ENCODE measurements at regions of chr22 and their contacts with region 1.

Region 1: DNA sequence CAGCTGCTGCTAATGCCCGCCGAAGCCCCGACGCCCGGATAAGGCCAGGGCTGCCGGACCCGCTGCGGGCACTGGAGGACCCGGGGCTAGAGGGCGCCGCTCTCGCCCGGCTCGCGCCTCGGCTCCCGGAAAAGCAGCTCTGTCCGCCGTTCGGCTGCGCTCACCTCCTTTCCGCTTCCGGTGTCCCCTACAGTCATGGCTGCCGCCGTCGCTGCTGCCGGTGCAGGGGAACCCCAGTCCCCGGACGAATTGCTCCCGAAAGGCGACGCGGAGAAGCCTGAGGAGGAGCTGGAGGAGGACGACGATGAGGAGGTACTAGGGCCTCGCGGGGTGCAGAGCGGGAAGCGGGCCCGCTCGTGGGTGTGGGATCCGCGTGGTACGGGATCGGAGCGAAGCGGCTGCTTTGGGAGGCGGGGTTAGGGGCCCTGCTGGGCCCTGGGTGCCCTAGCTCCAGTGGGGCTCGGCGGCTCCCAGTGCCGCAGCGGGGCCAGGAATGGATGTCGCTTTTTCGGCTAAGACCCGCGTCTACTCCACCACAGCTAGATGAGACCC is at the start of gene TOMM22:
- DNase-seq: peak; percentile 88 to 94 (median 92)
- ATAC-seq: peak; percentile 96 to 99 (median 99)
- H3K4me3 ChIP-seq: peak within 1 kb of the TSS; percentile 72 to 100 (median 92)
- H3K27ac ChIP-seq: peak within 1 kb of the TSS in 11 of 12 donors; percentile 53 to 88 (median 79)
- H3K4me1 ChIP-seq: peaks cover 0 to 17% (median 8%) of the 10 kb centered on the region in 12 donors
- H3K27me3 ChIP-seq: no peaks in the 10 kb centered on the region
- CTCF ChIP-seq: peak; percentile 24 to 91 (median 64)
- POLR2A ChIP-seq: peak in 1 of 2 donors; percentile 47
- total RNA-seq, gene TOMM22: 37.1 to 82.1 (median 71.6) TPM

Region 2: DNA sequence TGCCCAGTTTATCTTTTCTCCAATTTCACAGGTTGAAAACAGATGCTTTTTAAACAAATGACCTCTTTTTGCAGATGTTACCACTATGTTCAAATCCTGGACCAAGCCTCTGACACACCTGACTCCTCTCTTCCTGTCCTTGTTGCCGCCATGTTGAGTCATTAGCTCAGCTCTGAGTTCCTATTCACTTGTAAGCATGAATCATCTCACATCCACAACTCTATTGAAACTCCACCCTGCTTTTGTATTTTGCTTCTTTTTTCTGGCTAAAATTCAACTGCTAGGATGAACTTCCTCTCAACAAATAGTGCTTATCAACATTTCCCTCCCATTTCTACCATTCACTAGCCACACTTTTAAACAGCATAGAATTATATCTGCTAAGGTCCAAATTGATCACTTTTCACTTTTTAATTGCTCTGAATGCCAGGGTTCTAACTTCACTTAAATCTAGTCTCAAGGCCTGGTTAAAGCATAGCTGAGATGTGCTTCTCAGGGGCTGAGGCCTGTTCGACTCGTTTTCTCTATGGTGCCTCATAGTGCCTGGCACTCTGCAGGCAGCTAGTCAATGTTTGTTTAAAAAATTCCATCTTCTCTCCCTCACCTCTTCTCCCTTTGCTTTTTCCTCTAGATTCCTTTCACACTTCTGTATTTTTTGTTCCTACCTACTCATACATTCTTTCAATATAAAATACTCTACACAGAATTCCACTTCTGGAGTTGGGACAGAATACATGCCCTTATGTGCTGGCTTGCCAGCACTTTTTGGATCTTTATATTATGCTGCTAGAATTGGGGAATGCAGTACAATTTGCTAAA is 15.0 kb after region 1 on chr22:
- intact Hi-C with region 1: loop called in 2 of 10 experiments (anchors 2 kb)
- DNase-seq: no peak
- ATAC-seq: peak in 1 of 4 donors; percentile 52
- H3K4me3 ChIP-seq: peak overlapping the region in 5 of 12 donors; percentile 3 to 87 (median 8)
- H3K27ac ChIP-seq: peak overlapping the region in 11 of 12 donors; percentile 45 to 99 (median 74)
- H3K4me1 ChIP-seq: peaks cover 23 to 61% (median 49%) of the 10 kb centered on the region in 12 donors
- H3K27me3 ChIP-seq: no peaks in the 10 kb centered on the region
- CTCF ChIP-seq: no peak
- POLR2A ChIP-seq: no peak

Measured in heart left ventricle (tissue), 16 donors.